Activated naive CD4-positive, alpha-beta T cell treated with anti-CD3 and anti-CD28 coated beads for 36 hours (primary cell): ENCODE measurements at regions of chr6 and their contacts with region 1.

Region 1: DNA sequence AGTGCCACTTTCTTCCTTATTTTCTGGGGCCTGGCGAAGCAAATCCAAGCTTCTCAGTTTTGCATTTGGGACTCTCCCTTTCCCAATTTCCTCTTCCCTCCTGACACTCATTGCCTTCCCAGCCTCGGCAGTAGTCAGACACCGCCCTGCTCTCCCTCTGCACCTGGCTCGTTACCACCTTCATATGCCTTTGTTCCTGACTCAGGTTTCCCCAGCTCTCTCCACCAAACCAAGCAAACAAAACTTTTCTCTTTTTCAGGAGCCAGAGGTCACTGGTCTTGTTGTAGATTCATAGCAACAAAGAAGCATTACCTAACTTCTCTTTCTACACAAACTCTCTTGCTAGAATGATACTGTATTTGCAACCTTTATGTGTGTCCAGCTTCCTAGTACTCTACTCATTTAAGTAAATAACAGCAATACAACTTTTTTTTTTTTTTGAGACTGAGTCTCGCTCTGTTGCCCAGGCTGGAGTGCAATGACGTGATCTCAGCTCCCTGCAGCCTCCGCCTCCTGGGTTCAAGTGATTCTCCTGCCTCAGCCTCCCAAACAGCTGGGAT is 9.0 kb upstream of the ZC3H12D start:
- DNase-seq: no peak
- H3K4me3 Mint-ChIP-seq: no peak overlapping the region
- H3K27ac Mint-ChIP-seq: peak overlapping the region; percentile 91
- H3K4me1 Mint-ChIP-seq: peaks cover 85% of the 10 kb centered on the region
- H3K27me3 Mint-ChIP-seq: no peaks in the 10 kb centered on the region

Region 2: DNA sequence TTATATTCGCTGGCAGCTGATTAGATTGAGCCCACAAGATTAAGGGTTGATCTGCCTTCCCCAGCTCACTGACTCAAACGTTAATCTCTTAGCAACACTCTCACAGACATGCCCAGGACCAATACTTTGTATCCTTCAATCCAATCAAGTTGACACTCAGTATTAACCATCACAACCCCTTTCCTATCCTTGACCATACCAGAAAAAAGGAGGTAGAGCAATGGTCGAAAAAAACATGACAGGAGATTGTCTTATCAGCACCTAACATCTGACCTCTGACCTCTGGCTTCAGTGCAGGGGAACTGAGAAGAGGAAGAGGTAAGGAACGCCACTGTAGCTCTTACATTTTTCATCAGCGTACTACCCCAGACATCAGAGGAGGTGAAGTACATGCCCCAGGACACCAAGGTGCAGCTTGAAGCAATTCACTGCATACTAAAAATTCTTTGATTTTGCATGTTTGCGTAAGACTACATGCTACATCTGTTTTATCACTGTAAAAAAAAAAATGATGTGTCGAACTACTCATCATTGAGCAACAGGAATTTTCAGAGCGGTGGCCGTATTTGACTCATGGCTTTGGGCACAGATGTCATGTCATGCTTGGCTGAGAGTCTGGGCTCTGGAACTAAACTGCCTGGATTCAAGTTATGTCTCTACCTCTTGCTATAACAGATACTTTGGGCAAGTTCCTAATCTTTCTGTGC is 364.3 kb before region 1 on chr6:
- CTCF ChIA-PET with region 1: no interaction called
- intact Hi-C with region 1: no loop called
- DNase-seq: peak; percentile 56
- H3K4me3 Mint-ChIP-seq: no peak overlapping the region
- H3K27ac Mint-ChIP-seq: peak overlapping the region; percentile 83
- H3K4me1 Mint-ChIP-seq: peaks cover 51% of the 10 kb centered on the region
- H3K27me3 Mint-ChIP-seq: no peaks in the 10 kb centered on the region

Region 3: DNA sequence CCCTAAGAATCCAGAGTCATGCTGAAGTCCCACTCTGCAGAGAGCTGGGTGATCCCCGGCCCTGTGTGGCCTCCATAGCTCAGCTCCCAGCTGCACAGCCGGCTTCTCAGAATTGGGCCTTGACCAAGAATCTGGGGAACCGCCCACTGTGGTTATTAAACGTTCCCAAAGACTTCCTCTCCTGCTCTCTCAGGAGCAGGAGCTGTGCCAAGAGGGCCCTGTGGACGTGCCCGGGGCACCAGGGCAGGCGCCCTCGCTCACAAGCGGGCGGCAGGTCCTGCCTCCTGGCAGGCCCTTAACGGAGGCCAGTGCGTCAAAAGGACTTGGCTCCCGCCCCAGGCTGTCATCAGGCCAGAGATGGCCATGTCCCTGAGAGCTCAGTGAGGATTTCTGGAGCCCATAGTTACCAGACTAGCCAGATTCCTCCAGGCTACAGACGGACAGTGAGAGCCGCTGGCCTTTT is 39.4 kb before region 1 on chr6:
- CTCF ChIA-PET with region 1: no interaction called
- intact Hi-C with region 1: no loop called
- DNase-seq: no peak
- H3K4me3 Mint-ChIP-seq: no peak overlapping the region
- H3K27ac Mint-ChIP-seq: no peak overlapping the region
- H3K4me1 Mint-ChIP-seq: peaks cover 21% of the 10 kb centered on the region
- H3K27me3 Mint-ChIP-seq: no peaks in the 10 kb centered on the region

Region 4: GRCh38 chr6:149508485-149508884 is 14.6 kb after region 1 on chr6:
- CTCF ChIA-PET with region 1: interaction called, 21 read pairs
- intact Hi-C with region 1: loop called (anchors 1 kb)
- DNase-seq: peak; percentile 72
- H3K4me3 Mint-ChIP-seq: no peak overlapping the region
- H3K27ac Mint-ChIP-seq: peak overlapping the region; percentile 91
- H3K4me1 Mint-ChIP-seq: peaks cover 57% of the 10 kb centered on the region
- H3K27me3 Mint-ChIP-seq: no peaks in the 10 kb centered on the region